ENCODE measurements at regions of chr4 and their contacts with region 1.

Region 1: GRCh38 chr4:174522183-174523048 is at the start of gene HPGD:
- DNase-seq: peak; percentile 39 to 87 (median 75)
- ATAC-seq: peak; percentile 95
- H3K4me3 ChIP-seq: peak within 1 kb of the TSS; percentile 61 to 62
- H3K4me3 Mint-ChIP-seq: peak within 1 kb of the TSS; percentile 87
- H3K27ac ChIP-seq: peak within 1 kb of the TSS; percentile 49 to 65
- H3K27ac Mint-ChIP-seq: peak within 1 kb of the TSS; percentile 87
- H3K4me1 ChIP-seq: peaks cover 5% of the 10 kb centered on the region
- H3K4me1 Mint-ChIP-seq: peaks cover 34% of the 10 kb centered on the region
- H3K27me3 ChIP-seq: no peaks in the 10 kb centered on the region
- H3K27me3 Mint-ChIP-seq: peaks cover 17% of the 10 kb centered on the region
- CTCF ChIP-seq: no peak
- total RNA-seq, gene HPGD: 6.1 to 9.1 TPM

Region 2: DNA sequence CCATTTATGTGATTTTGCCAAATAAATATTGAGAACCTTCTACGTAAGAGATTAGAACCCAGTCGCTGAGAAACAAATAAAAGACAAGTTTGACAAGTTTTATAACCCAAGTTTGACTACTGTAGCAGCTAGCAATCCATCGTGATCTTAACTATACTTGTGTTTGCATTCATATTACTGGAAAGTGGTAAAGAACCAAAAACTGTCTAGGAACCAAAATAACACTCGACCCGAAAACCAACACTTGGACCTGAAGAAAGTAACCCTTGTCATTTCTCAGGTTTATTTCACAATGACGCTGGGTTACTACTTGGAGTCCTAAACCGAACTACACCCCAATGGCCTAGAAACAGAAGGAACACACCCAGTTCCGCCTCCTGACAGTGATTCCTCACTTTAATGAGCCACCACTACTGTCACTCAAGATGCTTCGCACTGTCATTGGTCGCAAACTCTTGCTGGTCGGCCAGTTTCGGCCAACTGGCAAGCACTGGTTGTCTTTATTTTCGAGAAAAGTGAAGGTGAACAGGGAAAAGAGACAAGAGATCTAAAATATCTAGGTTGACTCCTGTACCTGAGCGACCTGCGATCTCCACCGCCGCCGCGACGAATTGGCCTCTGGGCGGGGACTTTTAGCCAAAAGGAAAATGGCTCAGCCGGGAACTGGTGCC is 239.4 kb before region 1 on chr4:
- CTCF ChIA-PET with region 1: no interaction called
- POLR2A ChIA-PET with region 1: interaction called, 3 read pairs
- intact Hi-C with region 1: loop called in 1 of 2 experiments (anchors 2 kb)
- DNase-seq: peak; percentile 61 to 94 (median 80)
- ATAC-seq: peak; percentile 93
- H3K4me3 ChIP-seq: peak overlapping the region; percentile 88 to 99
- H3K4me3 Mint-ChIP-seq: peak overlapping the region; percentile 100
- H3K27ac ChIP-seq: peak overlapping the region; percentile 98 to 100
- H3K27ac Mint-ChIP-seq: peak overlapping the region; percentile 100
- H3K4me1 ChIP-seq: peaks cover 14% of the 10 kb centered on the region
- H3K4me1 Mint-ChIP-seq: peaks cover 76% of the 10 kb centered on the region
- H3K27me3 ChIP-seq: no peaks in the 10 kb centered on the region
- H3K27me3 Mint-ChIP-seq: no peaks in the 10 kb centered on the region
- CTCF ChIP-seq: no peak

Region 3: GRCh38 chr4:174365018-174365587 is 157.3 kb before region 1 on chr4:
- CTCF ChIA-PET with region 1: interaction called, 3 read pairs
- POLR2A ChIA-PET with region 1: no interaction called
- intact Hi-C with region 1: loop called in 1 of 2 experiments (anchors 5 kb)
- DNase-seq: peak in 3 of 9 experiments; percentile 12 to 53 (median 49)
- ATAC-seq: no peak
- H3K4me3 ChIP-seq: no peak overlapping the region
- H3K4me3 Mint-ChIP-seq: no peak overlapping the region
- H3K27ac ChIP-seq: no peak overlapping the region
- H3K27ac Mint-ChIP-seq: no peak overlapping the region
- H3K4me1 ChIP-seq: no peaks in the 10 kb centered on the region
- H3K4me1 Mint-ChIP-seq: no peaks in the 10 kb centered on the region
- H3K27me3 ChIP-seq: no peaks in the 10 kb centered on the region
- H3K27me3 Mint-ChIP-seq: peaks cover 2% of the 10 kb centered on the region
- CTCF ChIP-seq: peak; percentile 70

Region 4: DNA sequence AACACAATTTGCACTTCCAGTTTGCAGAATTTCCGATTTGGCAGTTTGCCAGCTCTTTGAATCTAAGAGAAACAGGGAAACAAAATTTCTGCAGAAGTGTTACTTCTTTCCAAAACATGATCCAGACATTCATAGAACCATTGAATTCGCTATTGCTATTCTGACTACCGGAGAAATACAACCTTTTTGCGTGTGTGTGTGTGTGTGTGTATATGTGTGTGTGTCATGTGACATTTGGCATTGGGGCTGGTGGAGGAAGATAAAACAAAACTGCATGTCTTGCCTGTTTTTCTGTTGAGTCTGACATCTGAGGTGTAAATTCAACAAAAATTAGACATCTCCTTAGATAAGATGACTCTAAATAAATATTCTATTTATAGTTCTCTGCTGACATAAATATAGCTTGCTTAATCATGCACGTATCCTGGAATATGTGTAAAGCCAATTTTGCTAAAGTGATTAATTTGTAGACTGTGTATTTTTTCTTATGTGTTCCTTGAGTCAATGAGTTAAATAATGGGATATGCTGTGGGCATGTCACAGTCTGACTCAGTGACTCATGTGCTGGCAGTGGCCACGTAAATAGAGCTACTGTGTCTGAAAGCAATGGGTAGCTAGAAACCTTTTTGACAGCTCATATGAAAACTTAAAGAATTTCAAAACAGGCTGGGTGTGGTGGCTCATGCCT is 99.0 kb before region 1 on chr4:
- CTCF ChIA-PET with region 1: no interaction called
- POLR2A ChIA-PET with region 1: no interaction called
- intact Hi-C with region 1: loop called in 1 of 2 experiments (anchors 5 kb)
- DNase-seq: peak in 3 of 9 experiments; percentile 7 to 36 (median 16)
- ATAC-seq: no peak
- H3K4me3 ChIP-seq: no peak overlapping the region
- H3K4me3 Mint-ChIP-seq: peak overlapping the region; percentile 50
- H3K27ac ChIP-seq: no peak overlapping the region
- H3K27ac Mint-ChIP-seq: no peak overlapping the region
- H3K4me1 ChIP-seq: peaks cover 30% of the 10 kb centered on the region
- H3K4me1 Mint-ChIP-seq: peaks cover 38% of the 10 kb centered on the region
- H3K27me3 ChIP-seq: no peaks in the 10 kb centered on the region
- H3K27me3 Mint-ChIP-seq: no peaks in the 10 kb centered on the region
- CTCF ChIP-seq: no peak

Region 5: DNA sequence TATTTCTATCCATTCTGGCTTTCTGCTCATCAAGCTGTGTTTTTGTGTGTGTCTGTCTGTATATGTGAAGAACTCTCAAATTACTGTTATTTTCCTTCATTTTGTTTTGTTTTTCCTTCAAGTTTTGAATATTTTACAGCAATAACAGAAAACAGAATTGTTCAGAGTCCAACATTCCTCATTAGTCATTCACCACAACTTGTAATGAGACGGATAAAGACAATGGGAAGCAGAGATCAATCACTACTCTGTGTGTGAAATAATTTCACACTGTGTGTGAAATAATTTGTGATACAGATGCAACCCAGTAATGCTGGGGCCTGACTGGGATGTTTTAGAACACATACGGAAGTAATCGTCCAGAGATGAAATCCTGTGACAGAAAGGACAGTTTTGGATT is 55.3 kb before region 1 on chr4:
- CTCF ChIA-PET with region 1: no interaction called
- POLR2A ChIA-PET with region 1: no interaction called
- intact Hi-C with region 1: no loop called
- DNase-seq: no peak
- ATAC-seq: no peak
- H3K4me3 ChIP-seq: no peak overlapping the region
- H3K4me3 Mint-ChIP-seq: no peak overlapping the region
- H3K27ac ChIP-seq: no peak overlapping the region
- H3K27ac Mint-ChIP-seq: no peak overlapping the region
- H3K4me1 ChIP-seq: no peaks in the 10 kb centered on the region
- H3K4me1 Mint-ChIP-seq: no peaks in the 10 kb centered on the region
- H3K27me3 ChIP-seq: no peaks in the 10 kb centered on the region
- H3K27me3 Mint-ChIP-seq: peaks cover 3% of the 10 kb centered on the region
- CTCF ChIP-seq: no peak

Region 6: DNA sequence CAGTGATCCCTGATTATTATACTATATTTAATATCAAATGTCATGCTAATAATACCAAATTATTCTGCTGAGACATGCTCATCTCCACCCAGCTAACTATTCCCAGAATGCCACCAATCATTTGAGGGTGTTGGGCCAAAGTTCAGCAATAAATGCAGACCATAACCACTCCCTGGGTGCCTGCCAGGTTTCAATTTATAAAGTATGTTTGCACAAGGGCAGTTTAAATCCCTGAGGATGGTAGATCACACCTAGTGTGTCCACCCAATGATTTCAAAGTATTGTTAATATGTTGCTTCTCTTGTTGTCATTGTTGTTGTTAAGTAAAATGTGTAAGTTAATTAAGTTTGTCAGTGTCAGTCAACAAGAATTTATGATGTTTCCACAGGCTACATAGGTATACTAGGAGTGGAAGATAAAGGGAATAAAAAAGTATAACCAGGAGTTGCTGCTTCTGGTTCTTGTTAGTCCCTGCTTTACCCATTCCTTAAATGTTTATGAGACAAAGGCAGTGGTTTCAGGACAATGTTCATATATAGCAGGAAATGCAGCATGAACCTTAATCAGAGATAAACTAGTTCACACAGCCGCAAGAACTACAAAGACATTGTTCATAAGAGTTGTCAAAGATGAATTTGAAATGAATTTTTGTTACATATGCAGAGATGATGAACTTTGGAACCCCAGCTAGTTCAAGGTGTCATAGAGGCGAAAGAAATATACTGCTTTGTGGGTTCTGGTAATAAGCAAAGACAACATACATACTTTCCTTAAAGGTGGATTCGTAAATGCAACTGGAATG is 25.6 kb before region 1 on chr4:
- CTCF ChIA-PET with region 1: no interaction called
- POLR2A ChIA-PET with region 1: no interaction called
- intact Hi-C with region 1: loop called in 1 of 2 experiments (anchors 2 kb)
- DNase-seq: no peak
- ATAC-seq: no peak
- H3K4me3 ChIP-seq: no peak overlapping the region
- H3K4me3 Mint-ChIP-seq: peak overlapping the region; percentile 44
- H3K27ac ChIP-seq: no peak overlapping the region
- H3K27ac Mint-ChIP-seq: peak overlapping the region; percentile 50
- H3K4me1 ChIP-seq: no peaks in the 10 kb centered on the region
- H3K4me1 Mint-ChIP-seq: peaks cover 19% of the 10 kb centered on the region
- H3K27me3 ChIP-seq: no peaks in the 10 kb centered on the region
- H3K27me3 Mint-ChIP-seq: no peaks in the 10 kb centered on the region
- CTCF ChIP-seq: no peak

Region 7: GRCh38 chr4:174631901-174632758 is 109.7 kb after region 1 on chr4:
- CTCF ChIA-PET with region 1: interaction called, 3 read pairs
- POLR2A ChIA-PET with region 1: interaction called, 4 read pairs
- intact Hi-C with region 1: loop called in 1 of 2 experiments (anchors 2 kb)
- DNase-seq: peak in 2 of 9 experiments; percentile 45 to 56
- ATAC-seq: peak; percentile 29
- H3K4me3 ChIP-seq: no peak overlapping the region
- H3K4me3 Mint-ChIP-seq: no peak overlapping the region
- H3K27ac ChIP-seq: no peak overlapping the region
- H3K27ac Mint-ChIP-seq: no peak overlapping the region
- H3K4me1 ChIP-seq: no peaks in the 10 kb centered on the region
- H3K4me1 Mint-ChIP-seq: peaks cover 2% of the 10 kb centered on the region
- H3K27me3 ChIP-seq: no peaks in the 10 kb centered on the region
- H3K27me3 Mint-ChIP-seq: no peaks in the 10 kb centered on the region
- CTCF ChIP-seq: peak; percentile 48

Region 8: GRCh38 chr4:176195184-176195978 is 1673.0 kb after region 1 on chr4 and contains the start of gene SPATA4:
- CTCF ChIA-PET with region 1: no interaction called
- POLR2A ChIA-PET with region 1: no interaction called
- intact Hi-C with region 1: loop called in 1 of 2 experiments (anchors 5 kb)
- DNase-seq: peak; percentile 89 to 96 (median 94)
- ATAC-seq: peak; percentile 98
- H3K4me3 ChIP-seq: peak within 1 kb of the TSS; percentile 53 to 65
- H3K4me3 Mint-ChIP-seq: peak within 1 kb of the TSS; percentile 86
- H3K27ac ChIP-seq: peak within 1 kb of the TSS; percentile 34 to 66
- H3K27ac Mint-ChIP-seq: peak within 1 kb of the TSS; percentile 86
- H3K4me1 ChIP-seq: peaks cover 4% of the 10 kb centered on the region
- H3K4me1 Mint-ChIP-seq: peaks cover 9% of the 10 kb centered on the region
- H3K27me3 ChIP-seq: peaks cover 0 to 2% of the 10 kb centered on the region in 2 experiments
- H3K27me3 Mint-ChIP-seq: peaks cover 23% of the 10 kb centered on the region
- CTCF ChIP-seq: no peak
- total RNA-seq, gene SPATA4: not detected

Measured in CD8-positive, alpha-beta T cell (primary cell).